ENCODE measurements at regions of chr4 and their contacts with region 1.

Region 1: DNA sequence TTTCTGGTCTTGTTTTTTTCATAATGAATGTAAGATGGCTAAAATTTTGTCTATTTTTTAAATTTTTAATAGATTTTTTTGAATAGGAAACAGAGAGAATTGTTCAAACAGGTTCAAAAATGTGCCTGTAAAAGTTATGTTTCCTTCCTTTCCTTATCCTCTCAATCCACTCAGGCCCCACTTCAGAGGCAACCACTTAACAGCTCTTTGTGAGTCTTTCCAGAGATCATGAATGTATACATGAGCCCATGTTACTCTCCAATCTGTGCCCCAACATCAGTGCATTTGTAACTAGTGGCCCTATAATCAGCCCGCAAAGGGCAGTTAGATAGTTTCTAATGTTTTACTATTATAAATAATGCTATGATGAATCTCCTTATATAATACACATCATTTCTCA is 14.0 kb downstream of the CFI start:
- DNase-seq: no peak
- ATAC-seq: no peak
- H3K4me3 Mint-ChIP-seq: no peak overlapping the region
- H3K27ac Mint-ChIP-seq: no peak overlapping the region
- H3K4me1 Mint-ChIP-seq: no peaks in the 10 kb centered on the region
- H3K27me3 Mint-ChIP-seq: peaks cover 7% of the 10 kb centered on the region

Region 2: GRCh38 chr4:109548655-109549054 is 239.2 kb before region 1 on chr4:
- CTCF ChIA-PET with region 1: no interaction called
- POLR2A ChIA-PET with region 1: no interaction called
- intact Hi-C with region 1: no loop called
- DNase-seq: peak; percentile 61
- ATAC-seq: peak; percentile 88
- H3K4me3 Mint-ChIP-seq: no peak overlapping the region
- H3K27ac Mint-ChIP-seq: peak overlapping the region; percentile 69
- H3K4me1 Mint-ChIP-seq: peaks cover 24% of the 10 kb centered on the region
- H3K27me3 Mint-ChIP-seq: no peaks in the 10 kb centered on the region

Region 3: DNA sequence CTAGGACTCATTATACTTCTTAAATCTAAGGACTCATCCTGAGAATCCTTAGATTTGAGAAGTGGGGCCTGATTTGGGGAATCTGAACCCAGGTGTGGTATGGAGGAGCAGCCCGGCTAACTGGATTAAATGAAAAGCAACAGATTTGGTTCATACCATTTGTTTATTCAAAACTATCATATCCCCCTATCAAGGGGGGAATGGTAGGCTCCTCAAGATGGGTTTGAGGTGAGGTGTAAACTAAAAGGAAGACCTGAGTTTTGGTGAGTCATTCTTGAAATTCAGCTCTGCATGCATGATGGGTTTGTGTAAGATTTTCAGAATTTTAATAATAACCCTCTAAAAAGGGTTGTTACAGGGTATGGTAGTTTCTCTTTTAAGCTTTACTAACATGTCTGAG is 137.9 kb before region 1 on chr4:
- CTCF ChIA-PET with region 1: no interaction called
- POLR2A ChIA-PET with region 1: no interaction called
- intact Hi-C with region 1: no loop called
- DNase-seq: no peak
- ATAC-seq: peak; percentile 59
- H3K4me3 Mint-ChIP-seq: no peak overlapping the region
- H3K27ac Mint-ChIP-seq: peak overlapping the region; percentile 61
- H3K4me1 Mint-ChIP-seq: peaks cover 42% of the 10 kb centered on the region
- H3K27me3 Mint-ChIP-seq: no peaks in the 10 kb centered on the region

Region 4: GRCh38 chr4:109699553-109700225 is 88.1 kb before region 1 on chr4:
- CTCF ChIA-PET with region 1: no interaction called
- POLR2A ChIA-PET with region 1: no interaction called
- intact Hi-C with region 1: no loop called
- DNase-seq: no peak
- ATAC-seq: no peak
- H3K4me3 Mint-ChIP-seq: no peak overlapping the region
- H3K27ac Mint-ChIP-seq: no peak overlapping the region
- H3K4me1 Mint-ChIP-seq: peaks cover 40% of the 10 kb centered on the region
- H3K27me3 Mint-ChIP-seq: no peaks in the 10 kb centered on the region

Region 5: DNA sequence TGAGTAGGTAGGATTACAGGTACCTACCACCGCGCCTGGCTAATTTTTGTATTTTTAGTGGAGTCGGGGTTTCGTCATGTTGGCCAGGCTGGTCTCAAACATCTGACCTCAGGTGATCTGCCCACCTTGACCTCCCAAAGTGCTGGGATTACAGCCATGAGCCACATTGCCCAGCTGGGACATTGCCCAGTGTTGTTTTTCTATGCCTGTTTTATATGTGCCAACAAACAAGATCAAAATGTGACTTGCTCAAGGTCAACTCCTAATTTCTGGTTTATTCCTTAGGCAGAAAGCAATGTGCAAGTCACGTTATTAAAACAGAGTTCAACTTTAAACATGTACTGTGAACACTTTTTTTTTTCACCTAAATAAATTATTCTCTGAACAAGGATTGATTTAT is 62.8 kb after region 1 on chr4:
- CTCF ChIA-PET with region 1: no interaction called
- POLR2A ChIA-PET with region 1: no interaction called
- intact Hi-C with region 1: no loop called
- DNase-seq: no peak
- ATAC-seq: no peak
- H3K4me3 Mint-ChIP-seq: no peak overlapping the region
- H3K27ac Mint-ChIP-seq: no peak overlapping the region
- H3K4me1 Mint-ChIP-seq: peaks cover 5% of the 10 kb centered on the region
- H3K27me3 Mint-ChIP-seq: no peaks in the 10 kb centered on the region

Region 6: DNA sequence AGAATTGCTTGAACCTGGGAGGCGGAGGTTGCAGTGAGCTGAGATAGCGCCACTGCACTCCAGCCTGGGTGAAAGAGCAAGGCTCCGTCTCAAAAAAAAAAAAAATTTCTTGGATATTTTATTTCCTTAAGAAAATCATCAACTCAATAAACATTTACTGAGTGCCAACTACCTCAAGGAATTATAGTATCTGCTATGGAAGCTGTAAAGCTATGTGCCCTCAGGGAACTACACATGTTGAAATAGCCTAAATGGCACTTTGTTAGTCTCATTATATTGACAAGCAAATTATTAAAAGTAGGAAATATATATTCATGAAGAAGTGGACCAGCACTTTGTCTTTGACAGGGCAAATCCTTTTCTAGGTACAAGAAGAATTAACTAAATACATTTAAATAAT is 369.8 kb after region 1 on chr4:
- CTCF ChIA-PET with region 1: no interaction called
- POLR2A ChIA-PET with region 1: interaction called, 10 read pairs
- intact Hi-C with region 1: no loop called
- DNase-seq: no peak
- ATAC-seq: no peak
- H3K4me3 Mint-ChIP-seq: no peak overlapping the region
- H3K27ac Mint-ChIP-seq: no peak overlapping the region
- H3K4me1 Mint-ChIP-seq: no peaks in the 10 kb centered on the region
- H3K27me3 Mint-ChIP-seq: no peaks in the 10 kb centered on the region